Colonic mucosa (tissue), 4 donors: ENCODE measurements at regions of chr3 and their contacts with region 1.

Region 1: DNA sequence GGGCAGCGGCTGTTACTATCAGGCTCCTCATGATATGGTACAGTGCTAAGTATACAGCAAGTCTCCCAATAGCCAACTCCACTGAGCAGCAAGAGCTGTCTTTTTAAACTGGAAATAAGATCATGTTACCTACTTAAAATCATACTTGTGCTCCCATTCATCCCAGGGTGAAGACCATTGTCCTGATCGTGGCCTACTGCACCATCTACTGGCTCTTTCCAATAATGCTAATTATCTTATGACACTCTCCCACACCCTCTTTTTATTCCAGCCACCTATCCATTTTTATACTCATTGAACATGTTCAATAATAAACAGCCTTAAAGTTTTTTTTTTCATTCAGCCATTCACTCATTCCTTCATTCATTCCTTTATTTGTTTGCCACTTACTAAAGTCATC is 117.7 kb downstream of the GBE1 start:
- DNase-seq: no peak
- H3K4me3 ChIP-seq: no peak overlapping the region
- H3K27ac ChIP-seq: no peak overlapping the region
- H3K4me1 ChIP-seq: no peaks in the 10 kb centered on the region
- H3K27me3 ChIP-seq: no peaks in the 10 kb centered on the region
- CTCF ChIP-seq: no peak

Region 2: DNA sequence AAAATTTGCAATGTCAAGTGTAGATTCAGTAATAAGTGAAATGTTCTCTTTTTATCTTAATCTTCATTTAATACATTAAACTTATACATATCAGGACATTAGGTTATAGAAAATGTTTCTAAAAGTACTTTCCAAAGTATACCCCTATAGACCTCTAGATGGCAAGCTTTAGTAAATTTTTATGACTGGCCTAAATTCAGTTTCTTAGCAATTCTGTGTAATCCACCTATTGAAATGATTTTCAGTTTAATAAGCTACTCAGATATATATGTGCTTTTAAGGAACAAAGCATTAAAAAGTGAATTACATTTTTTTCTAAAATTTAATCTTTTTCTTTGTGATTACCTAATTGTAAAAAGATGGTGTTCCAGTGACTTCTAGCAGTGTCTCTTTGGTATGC is 224.5 kb before region 1 on chr3:
- intact Hi-C with region 1: loop called (anchors 5 kb)
- DNase-seq: no peak
- H3K4me3 ChIP-seq: no peak overlapping the region
- H3K27ac ChIP-seq: no peak overlapping the region
- H3K4me1 ChIP-seq: no peaks in the 10 kb centered on the region
- H3K27me3 ChIP-seq: no peaks in the 10 kb centered on the region
- CTCF ChIP-seq: peak; percentile 25

Region 3: GRCh38 chr3:81490541-81491288 is 153.0 kb before region 1 on chr3:
- intact Hi-C with region 1: loop called (anchors 10 kb)
- DNase-seq: peak; percentile 87
- H3K4me3 ChIP-seq: no peak overlapping the region
- H3K27ac ChIP-seq: no peak overlapping the region
- H3K4me1 ChIP-seq: no peaks in the 10 kb centered on the region
- H3K27me3 ChIP-seq: no peaks in the 10 kb centered on the region
- CTCF ChIP-seq: peak; percentile 67

Region 4: DNA sequence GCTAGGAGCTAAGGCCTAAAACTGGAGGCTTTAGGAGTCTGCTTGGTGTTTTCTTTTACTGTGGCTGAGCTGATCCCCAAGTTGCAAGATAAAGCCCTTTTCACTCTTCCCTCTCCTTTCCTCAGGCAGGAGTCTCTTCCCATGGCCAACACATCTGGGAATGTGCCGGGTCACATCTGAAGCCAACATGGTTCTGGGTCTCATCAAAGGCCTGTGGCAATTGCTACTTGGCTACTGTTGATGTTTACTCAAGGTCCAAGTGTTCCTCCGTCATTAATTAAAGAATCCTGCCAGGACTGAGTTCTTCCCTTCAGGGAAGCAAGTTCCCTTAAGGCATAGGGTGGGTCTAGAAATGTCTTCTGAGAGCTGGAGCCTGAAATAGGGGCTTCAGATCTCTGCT is 112.5 kb before region 1 on chr3:
- intact Hi-C with region 1: no loop called
- DNase-seq: no peak
- H3K4me3 ChIP-seq: no peak overlapping the region
- H3K27ac ChIP-seq: no peak overlapping the region
- H3K4me1 ChIP-seq: no peaks in the 10 kb centered on the region
- H3K27me3 ChIP-seq: no peaks in the 10 kb centered on the region
- CTCF ChIP-seq: no peak

Region 5: GRCh38 chr3:81581966-81582599 is 61.6 kb before region 1 on chr3:
- intact Hi-C with region 1: loop called (anchors 5 kb)
- DNase-seq: peak; percentile 31
- H3K4me3 ChIP-seq: no peak overlapping the region
- H3K27ac ChIP-seq: no peak overlapping the region
- H3K4me1 ChIP-seq: no peaks in the 10 kb centered on the region
- H3K27me3 ChIP-seq: no peaks in the 10 kb centered on the region
- CTCF ChIP-seq: peak; percentile 30

Region 6: DNA sequence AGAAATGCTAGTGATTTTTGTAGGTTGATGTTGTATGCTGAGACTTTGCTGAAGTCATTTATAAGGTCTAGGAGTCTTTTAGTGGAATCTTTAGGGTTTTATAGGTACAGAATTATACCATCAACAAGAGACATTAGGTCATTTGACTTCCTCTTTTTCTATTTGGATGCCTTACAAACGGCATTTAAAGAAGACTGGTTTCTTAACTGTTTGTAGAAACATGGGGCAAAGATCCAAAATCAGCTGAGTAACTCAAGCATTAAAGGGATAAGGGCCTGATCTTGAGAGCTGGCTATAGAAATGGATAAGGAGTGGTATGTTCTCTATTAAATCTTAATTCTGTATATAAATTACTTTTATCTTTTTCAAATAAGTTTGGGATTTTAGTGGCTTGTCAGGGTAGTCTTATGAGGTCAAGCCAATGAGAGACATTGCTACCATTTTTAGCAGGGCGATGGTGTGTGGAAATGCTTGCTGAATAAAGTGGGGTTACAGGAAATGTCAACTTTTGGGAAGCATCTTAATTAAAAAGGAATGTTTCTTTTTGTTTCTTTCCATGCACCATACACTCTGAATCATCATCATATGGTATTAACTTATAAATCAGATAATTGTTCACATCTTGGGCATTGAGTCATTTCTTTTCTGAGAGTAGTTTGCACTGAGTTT is 315.4 kb after region 1 on chr3:
- intact Hi-C with region 1: no loop called
- DNase-seq: no peak
- H3K4me3 ChIP-seq: no peak overlapping the region
- H3K27ac ChIP-seq: no peak overlapping the region
- H3K4me1 ChIP-seq: no peaks in the 10 kb centered on the region
- H3K27me3 ChIP-seq: no peaks in the 10 kb centered on the region
- CTCF ChIP-seq: no peak